Ovary (tissue), 10 donors: ENCODE measurements at regions of chr11 and their contacts with region 1.

Region 1: DNA sequence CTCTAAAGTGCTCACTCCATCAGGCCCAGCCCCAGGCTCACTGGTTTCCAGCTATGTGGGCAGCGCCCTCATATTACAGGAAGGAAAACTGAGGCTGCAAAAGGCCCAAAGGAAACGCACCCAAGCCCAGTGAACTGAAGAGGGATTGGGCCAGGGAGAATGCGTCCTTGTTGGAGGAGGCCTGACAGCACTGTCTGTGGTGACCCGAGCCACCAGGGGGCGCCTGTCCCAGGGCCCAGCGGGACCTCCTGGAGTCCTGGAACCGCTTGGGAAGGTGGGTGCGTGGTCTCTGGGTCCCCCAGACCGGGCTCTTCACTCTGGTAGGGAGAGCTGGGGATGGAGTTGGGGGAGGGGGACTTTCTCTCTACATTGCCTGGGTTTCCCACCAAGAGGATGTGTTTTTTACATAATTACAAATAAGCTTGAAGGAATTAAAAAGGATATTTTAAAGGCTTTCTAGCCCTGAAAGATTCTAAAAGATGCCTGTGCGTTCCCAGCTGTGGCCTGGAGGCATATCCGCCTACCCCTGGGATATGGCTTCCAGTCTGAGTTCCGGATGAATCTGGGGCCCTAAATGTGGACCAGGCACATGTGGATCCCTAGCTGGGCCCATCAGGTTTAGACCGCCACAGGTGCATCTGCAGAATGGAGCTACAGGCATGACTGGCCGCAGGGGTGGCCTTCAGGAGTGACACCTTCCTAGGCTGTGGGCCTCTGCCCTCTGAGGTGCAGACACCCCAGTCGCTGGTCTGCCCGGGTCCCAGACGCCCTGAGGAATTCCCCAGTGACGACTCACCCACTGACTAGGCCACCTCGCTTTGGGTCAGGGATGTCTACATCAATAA is 4.2 kb downstream of the SPI1 start:
- DNase-seq: peak; percentile 81 to 89 (median 85)
- H3K4me3 ChIP-seq: no peak overlapping the region
- H3K27ac ChIP-seq: no peak overlapping the region
- H3K4me1 ChIP-seq: no peaks in the 10 kb centered on the region
- H3K27me3 ChIP-seq: no peaks in the 10 kb centered on the region
- CTCF ChIP-seq: peak; percentile 78 to 88 (median 85)
- EP300 ChIP-seq: no peak
- POLR2A ChIP-seq: no peak

Region 2: GRCh38 chr11:47355283-47356128 is 18.6 kb before region 1 on chr11:
- intact Hi-C with region 1: no loop called
- DNase-seq: peak; percentile 91 to 97 (median 94)
- H3K4me3 ChIP-seq: peak overlapping the region; percentile 49
- H3K27ac ChIP-seq: peak overlapping the region in 1 of 2 donors; percentile 72
- H3K4me1 ChIP-seq: peaks cover 2% of the 10 kb centered on the region
- H3K27me3 ChIP-seq: no peaks in the 10 kb centered on the region
- CTCF ChIP-seq: peak; percentile 87 to 96 (median 93)
- EP300 ChIP-seq: no peak
- POLR2A ChIP-seq: no peak

Region 3: GRCh38 chr11:47454180-47454644 is 80.1 kb after region 1 on chr11:
- intact Hi-C with region 1: loop called in 3 of 4 experiments (anchors 2 to 10 kb)
- DNase-seq: peak; percentile 65 to 81 (median 73)
- H3K4me3 ChIP-seq: no peak overlapping the region
- H3K27ac ChIP-seq: no peak overlapping the region
- H3K4me1 ChIP-seq: peaks cover 1% of the 10 kb centered on the region
- H3K27me3 ChIP-seq: no peaks in the 10 kb centered on the region
- CTCF ChIP-seq: peak; percentile 52 to 56 (median 55)
- EP300 ChIP-seq: no peak
- POLR2A ChIP-seq: no peak

Region 4: DNA sequence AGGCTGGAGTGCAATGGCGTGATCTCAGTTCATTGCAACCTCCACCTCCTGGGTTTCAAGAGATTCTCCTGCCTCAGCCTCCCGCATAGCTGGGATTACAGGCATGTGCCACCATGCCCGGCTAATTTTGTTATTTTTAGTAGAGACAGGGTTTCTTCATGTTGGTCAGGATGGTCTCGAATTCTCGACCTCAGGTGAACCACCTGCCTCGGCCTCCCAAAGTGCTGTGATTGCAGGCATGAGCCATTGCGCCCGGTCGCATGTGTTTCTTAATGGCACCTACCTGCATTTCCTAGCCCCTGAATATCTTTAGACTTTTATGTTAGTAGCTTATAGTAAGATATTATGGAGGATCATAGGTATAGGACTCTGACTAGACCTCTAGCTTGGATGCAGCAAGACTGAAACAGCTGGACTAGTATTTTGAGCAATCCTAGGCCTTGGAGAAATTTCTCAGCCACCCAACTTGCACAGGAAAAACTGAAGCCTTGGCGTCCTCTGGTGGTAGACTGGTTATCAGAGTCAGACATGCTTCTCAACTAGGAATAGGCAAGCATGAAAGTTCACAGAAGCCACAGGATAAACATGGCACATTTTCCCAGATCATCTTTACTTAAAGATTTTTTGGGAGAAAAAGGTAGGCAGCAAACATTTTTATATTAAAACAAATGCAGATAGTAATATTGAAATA is 242.8 kb after region 1 on chr11:
- intact Hi-C with region 1: loop called in 3 of 4 experiments (anchors 10 kb)
- DNase-seq: peak in 4 of 5 donors; percentile 62 to 76 (median 68)
- H3K4me3 ChIP-seq: no peak overlapping the region
- H3K27ac ChIP-seq: peak overlapping the region in 1 of 2 donors; percentile 36
- H3K4me1 ChIP-seq: peaks cover 2% of the 10 kb centered on the region
- H3K27me3 ChIP-seq: no peaks in the 10 kb centered on the region
- CTCF ChIP-seq: peak; percentile 61 to 87 (median 64)
- EP300 ChIP-seq: no peak
- POLR2A ChIP-seq: no peak

Region 5: GRCh38 chr11:47688111-47688510 is 314.0 kb after region 1 on chr11:
- intact Hi-C with region 1: no loop called
- DNase-seq: no peak
- H3K4me3 ChIP-seq: no peak overlapping the region
- H3K27ac ChIP-seq: no peak overlapping the region
- H3K4me1 ChIP-seq: no peaks in the 10 kb centered on the region
- H3K27me3 ChIP-seq: no peaks in the 10 kb centered on the region
- CTCF ChIP-seq: no peak
- EP300 ChIP-seq: no peak
- POLR2A ChIP-seq: no peak